PC-9 (cell line): ENCODE measurements at regions of chr1 and their contacts with region 1.

Region 1: GRCh38 chr1:15323351-15323988 is 76.4 kb downstream of the FHAD1 start:
- DNase-seq: peak; percentile 46 to 72
- H3K4me3 ChIP-seq: no peak overlapping the region
- H3K27ac ChIP-seq: no peak overlapping the region
- H3K4me1 ChIP-seq: no peaks in the 10 kb centered on the region
- H3K27me3 ChIP-seq: no peaks in the 10 kb centered on the region
- CTCF ChIP-seq: peak; percentile 91

Region 2: GRCh38 chr1:15352123-15352957 is 28.9 kb after region 1 on chr1:
- CTCF ChIA-PET with region 1: interaction called, 4 read pairs
- POLR2A ChIA-PET with region 1: no interaction called
- intact Hi-C with region 1: loop called (anchors 2 kb)
- DNase-seq: peak; percentile 84 to 94
- H3K4me3 ChIP-seq: no peak overlapping the region; the same call in 1 of the 2 replicates
- H3K27ac ChIP-seq: peak overlapping the region; percentile 91
- H3K4me1 ChIP-seq: peaks cover 80% of the 10 kb centered on the region
- H3K27me3 ChIP-seq: no peaks in the 10 kb centered on the region
- CTCF ChIP-seq: no peak

Region 3: DNA sequence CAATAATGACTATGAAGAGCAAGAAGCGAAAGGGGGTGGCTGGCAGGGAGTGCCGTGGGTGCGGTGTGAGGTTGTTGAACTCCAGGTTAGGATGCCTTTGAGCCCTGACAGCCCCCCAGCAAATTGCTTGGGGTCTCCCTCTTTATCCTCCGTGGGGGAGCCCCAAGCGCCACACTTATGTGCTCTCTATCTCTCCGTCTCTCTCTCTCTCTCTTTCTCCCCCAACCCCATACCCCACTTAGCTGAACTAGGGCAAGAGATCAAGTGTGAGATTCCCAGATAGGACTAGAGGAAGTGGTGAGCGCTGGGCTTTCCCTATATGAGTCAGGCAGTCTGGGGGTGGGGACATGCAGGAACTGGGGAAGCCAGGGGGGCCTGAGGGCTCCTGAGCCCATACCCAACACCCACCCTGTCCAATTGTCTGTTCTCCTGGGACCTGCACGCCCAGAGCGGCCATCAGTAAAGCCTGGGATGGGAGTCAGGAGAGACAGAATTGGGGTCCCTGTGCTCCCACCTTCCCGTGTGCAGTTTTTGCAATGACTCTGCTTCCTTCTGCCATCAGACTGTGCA is 94.0 kb after region 1 on chr1:
- CTCF ChIA-PET with region 1: interaction called, 9 read pairs
- POLR2A ChIA-PET with region 1: interaction called, 3 read pairs
- intact Hi-C with region 1: loop called (anchors 1 kb)
- DNase-seq: peak; percentile 75 to 76
- H3K4me3 ChIP-seq: peak overlapping the region; percentile 39; the same call in 1 of the 2 replicates
- H3K27ac ChIP-seq: peak overlapping the region; percentile 87
- H3K4me1 ChIP-seq: peaks cover 43% of the 10 kb centered on the region
- H3K27me3 ChIP-seq: no peaks in the 10 kb centered on the region
- CTCF ChIP-seq: no peak

Region 4: GRCh38 chr1:15430787-15431570 is 107.5 kb after region 1 on chr1:
- CTCF ChIA-PET with region 1: interaction called, 15 read pairs
- POLR2A ChIA-PET with region 1: no interaction called
- intact Hi-C with region 1: loop called (anchors 1 kb)
- DNase-seq: peak in 1 of 2 experiments; percentile 59
- H3K4me3 ChIP-seq: no peak overlapping the region
- H3K27ac ChIP-seq: no peak overlapping the region
- H3K4me1 ChIP-seq: 0 out of 2 replicates have a peak, but pooled peaks cover 6% of the 10 kb centered on the region
- H3K27me3 ChIP-seq: no peaks in the 10 kb centered on the region
- CTCF ChIP-seq: peak; percentile 94

Region 5: GRCh38 chr1:15489052-15489736 is 165.7 kb after region 1 on chr1:
- CTCF ChIA-PET with region 1: no interaction called
- POLR2A ChIA-PET with region 1: no interaction called
- intact Hi-C with region 1: no loop called
- DNase-seq: no peak
- H3K4me3 ChIP-seq: no peak overlapping the region
- H3K27ac ChIP-seq: no peak overlapping the region
- H3K4me1 ChIP-seq: no peaks in the 10 kb centered on the region
- H3K27me3 ChIP-seq: no peaks in the 10 kb centered on the region
- CTCF ChIP-seq: no peak

Region 6: GRCh38 chr1:15526490-15527339 is 203.2 kb after region 1 on chr1 and contains the start of gene DNAJC16:
- CTCF ChIA-PET with region 1: no interaction called
- POLR2A ChIA-PET with region 1: no interaction called
- intact Hi-C with region 1: loop called (anchors 10 kb)
- DNase-seq: peak; percentile 98 to 99
- H3K4me3 ChIP-seq: peak within 1 kb of the TSS; percentile 81
- H3K27ac ChIP-seq: peak within 1 kb of the TSS; percentile 69
- H3K4me1 ChIP-seq: peaks cover 17% of the 10 kb centered on the region
- H3K27me3 ChIP-seq: no peaks in the 10 kb centered on the region
- CTCF ChIP-seq: no peak
- total RNA-seq, gene DNAJC16: 12.0 and 18.8 TPM in 2 replicates